Ovary (tissue), 10 donors: ENCODE measurements at regions of chr16 and their contacts with region 1.

Region 1: GRCh38 chr16:31025339-31025738 is 8.0 kb upstream of the STX4 start:
- DNase-seq: no peak
- H3K4me3 ChIP-seq: no peak overlapping the region
- H3K27ac ChIP-seq: no peak overlapping the region
- H3K4me1 ChIP-seq: no peaks in the 10 kb centered on the region
- H3K27me3 ChIP-seq: no peaks in the 10 kb centered on the region
- CTCF ChIP-seq: no peak
- EP300 ChIP-seq: no peak
- POLR2A ChIP-seq: no peak

Region 2: DNA sequence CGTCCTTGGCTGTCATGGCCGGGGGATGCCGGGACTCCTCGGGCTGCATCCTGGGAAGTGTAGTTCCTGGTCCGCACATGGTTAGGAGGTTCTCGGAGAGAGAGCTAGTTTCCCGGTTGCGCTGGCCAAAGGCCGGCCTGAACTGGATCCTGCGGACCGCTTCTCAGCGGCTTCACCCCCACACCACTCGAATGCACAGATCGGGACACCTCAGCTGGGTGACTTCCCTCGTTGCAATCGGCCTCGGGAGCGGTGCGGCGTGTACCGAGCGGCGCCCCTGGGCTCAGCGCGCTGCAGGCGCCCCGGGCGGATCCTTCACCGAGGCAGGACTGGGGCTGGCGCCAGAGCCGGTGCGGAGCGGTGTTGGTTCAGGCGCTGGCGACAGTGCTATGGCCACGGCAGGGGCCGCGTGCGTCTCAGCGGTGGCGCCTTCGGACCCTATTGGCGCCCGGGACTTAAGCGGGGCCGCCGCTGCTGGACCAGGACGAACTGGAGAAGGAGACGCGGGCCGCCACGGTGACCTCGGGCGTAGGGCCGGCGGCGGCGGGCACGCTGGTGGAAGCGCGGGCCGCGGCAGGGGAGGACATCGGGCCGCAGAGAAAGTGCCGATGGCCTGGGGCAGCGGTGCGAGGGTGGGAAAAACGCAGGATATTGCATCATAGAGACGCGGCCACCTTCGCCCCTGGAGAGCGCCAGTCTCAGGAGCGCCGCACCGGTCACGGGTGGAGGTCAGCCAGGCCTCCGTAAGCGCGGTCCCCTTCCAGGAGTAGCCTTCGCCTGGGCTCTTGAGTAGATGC is 249.7 kb before region 1 on chr16:
- intact Hi-C with region 1: no loop called
- DNase-seq: peak; percentile 79 to 87 (median 82)
- H3K4me3 ChIP-seq: peak overlapping the region; percentile 58
- H3K27ac ChIP-seq: peak overlapping the region; percentile 39 to 73
- H3K4me1 ChIP-seq: peaks cover 7% of the 10 kb centered on the region
- H3K27me3 ChIP-seq: no peaks in the 10 kb centered on the region
- CTCF ChIP-seq: no peak
- EP300 ChIP-seq: no peak
- POLR2A ChIP-seq: peak; percentile 8

Region 3: DNA sequence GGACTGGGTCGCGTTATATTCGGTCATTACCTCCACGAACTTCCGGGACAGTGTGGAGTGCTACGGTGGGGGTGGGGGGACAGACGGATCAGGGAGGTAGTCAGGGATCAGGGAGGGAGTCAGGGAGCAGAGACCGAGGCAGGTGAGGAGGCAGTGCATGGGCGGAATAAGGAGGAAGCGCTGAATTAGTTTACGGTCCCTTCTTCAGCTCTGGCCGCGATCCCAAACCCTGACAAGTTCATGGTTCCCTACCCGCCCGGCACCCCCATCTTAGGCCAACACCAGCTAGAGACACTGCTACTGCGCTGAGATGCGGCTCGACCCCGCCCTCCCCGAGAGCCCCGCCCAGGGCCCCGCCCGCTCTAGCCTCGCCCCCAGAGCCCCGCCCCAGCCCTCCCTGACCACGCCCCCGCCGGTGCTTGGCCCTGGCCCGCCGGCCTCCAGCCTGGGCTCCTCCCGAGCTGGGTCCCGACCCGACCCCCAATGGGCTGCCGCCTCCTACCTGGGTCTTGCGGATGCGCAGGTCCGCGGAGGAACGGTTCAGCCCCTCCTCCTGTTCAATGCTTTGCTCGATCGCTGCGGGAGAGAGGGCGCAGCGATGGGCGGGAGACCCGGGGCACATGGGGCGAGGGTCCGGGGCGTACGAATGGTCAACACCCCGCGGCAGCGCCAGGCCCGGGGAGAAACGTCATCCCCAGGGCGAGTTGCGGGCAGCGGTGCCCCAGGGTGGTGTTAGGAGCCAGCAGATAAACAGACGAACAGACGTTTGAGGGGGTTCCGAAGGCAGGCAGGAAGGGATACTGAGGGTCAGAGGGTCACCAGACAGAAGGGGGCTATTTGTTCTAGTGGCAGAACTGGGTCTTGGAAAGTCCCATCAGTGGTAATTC is 28.1 kb before region 1 on chr16:
- intact Hi-C with region 1: loop called in 1 of 4 experiments (anchors 5 kb)
- DNase-seq: peak; percentile 76 to 86 (median 81)
- H3K4me3 ChIP-seq: peak overlapping the region; percentile 40
- H3K27ac ChIP-seq: peak overlapping the region; percentile 31 to 33
- H3K4me1 ChIP-seq: peaks cover 19% of the 10 kb centered on the region
- H3K27me3 ChIP-seq: no peaks in the 10 kb centered on the region
- CTCF ChIP-seq: no peak
- EP300 ChIP-seq: no peak
- POLR2A ChIP-seq: no peak